ENCODE measurements at regions of chr16 and their contacts with region 1.

Region 1: GRCh38 chr16:2429034-2429770 is at the start of gene CCNF:
- DNase-seq: peak; percentile 87 to 98 (median 92)
- ATAC-seq: peak; percentile 99
- H3K4me3 ChIP-seq: peak within 1 kb of the TSS; percentile 83
- H3K4me3 Mint-ChIP-seq: peak within 1 kb of the TSS; percentile 81 to 97 (median 88)
- H3K27ac ChIP-seq: peak within 1 kb of the TSS; percentile 68
- H3K27ac Mint-ChIP-seq: peak within 1 kb of the TSS; percentile 11 to 88 (median 71)
- H3K4me1 ChIP-seq: peaks cover 5 to 10% of the 10 kb centered on the region in 2 donors
- H3K4me1 Mint-ChIP-seq: peaks cover 12 to 38% (median 19%) of the 10 kb centered on the region in 7 donors
- H3K27me3 ChIP-seq: no peaks in the 10 kb centered on the region
- H3K27me3 Mint-ChIP-seq: no peaks in the 10 kb centered on the region
- total RNA-seq, gene CCNF: 2.6 to 50.1 (median 3.4) TPM

Region 2: GRCh38 chr16:2205104-2205966 is 223.9 kb before region 1 on chr16 and contains the start of gene MLST8:
- CTCF ChIA-PET with region 1: no interaction called
- POLR2A ChIA-PET with region 1: interaction called, 4 read pairs
- intact Hi-C with region 1: loop called in 1 of 2 experiments (anchors 1 kb)
- DNase-seq: peak; percentile 88 to 100 (median 98)
- ATAC-seq: peak; percentile 97
- H3K4me3 ChIP-seq: peak within 1 kb of the TSS; percentile 93
- H3K4me3 Mint-ChIP-seq: peak within 1 kb of the TSS; percentile 80 to 95 (median 88)
- H3K27ac ChIP-seq: peak within 1 kb of the TSS; percentile 97
- H3K27ac Mint-ChIP-seq: peak within 1 kb of the TSS; percentile 70 to 91 (median 86)
- H3K4me1 ChIP-seq: peaks cover 11 to 13% of the 10 kb centered on the region in 2 donors
- H3K4me1 Mint-ChIP-seq: peaks cover 7 to 29% (median 21%) of the 10 kb centered on the region in 7 donors
- H3K27me3 ChIP-seq: no peaks in the 10 kb centered on the region
- H3K27me3 Mint-ChIP-seq: peaks cover 0 to 11% (median 0%) of the 10 kb centered on the region in 5 donors
- total RNA-seq, gene MLST8: 25.1 to 41.2 (median 35.5) TPM

Region 3: GRCh38 chr16:2340564-2341455 is 88.4 kb before region 1 on chr16 and contains the start of gene ABCA3:
- CTCF ChIA-PET with region 1: no interaction called
- POLR2A ChIA-PET with region 1: no interaction called
- intact Hi-C with region 1: loop called (anchors 1 to 2 kb)
- DNase-seq: peak; percentile 85 to 100 (median 93)
- ATAC-seq: peak; percentile 96
- H3K4me3 ChIP-seq: peak within 1 kb of the TSS; percentile 62
- H3K4me3 Mint-ChIP-seq: peak within 1 kb of the TSS; percentile 78 to 91 (median 86)
- H3K27ac ChIP-seq: peak within 1 kb of the TSS; percentile 15
- H3K27ac Mint-ChIP-seq: peak within 1 kb of the TSS in 7 of 9 donors; percentile 31 to 82 (median 64)
- H3K4me1 ChIP-seq: peaks cover 6 to 9% of the 10 kb centered on the region in 2 donors
- H3K4me1 Mint-ChIP-seq: peaks cover 9 to 19% (median 16%) of the 10 kb centered on the region in 7 donors
- H3K27me3 ChIP-seq: no peaks in the 10 kb centered on the region
- H3K27me3 Mint-ChIP-seq: peaks cover 0 to 40% (median 0%) of the 10 kb centered on the region in 5 donors
- total RNA-seq, gene ABCA3: 7.0 to 10.0 (median 8.1) TPM

Region 4: DNA sequence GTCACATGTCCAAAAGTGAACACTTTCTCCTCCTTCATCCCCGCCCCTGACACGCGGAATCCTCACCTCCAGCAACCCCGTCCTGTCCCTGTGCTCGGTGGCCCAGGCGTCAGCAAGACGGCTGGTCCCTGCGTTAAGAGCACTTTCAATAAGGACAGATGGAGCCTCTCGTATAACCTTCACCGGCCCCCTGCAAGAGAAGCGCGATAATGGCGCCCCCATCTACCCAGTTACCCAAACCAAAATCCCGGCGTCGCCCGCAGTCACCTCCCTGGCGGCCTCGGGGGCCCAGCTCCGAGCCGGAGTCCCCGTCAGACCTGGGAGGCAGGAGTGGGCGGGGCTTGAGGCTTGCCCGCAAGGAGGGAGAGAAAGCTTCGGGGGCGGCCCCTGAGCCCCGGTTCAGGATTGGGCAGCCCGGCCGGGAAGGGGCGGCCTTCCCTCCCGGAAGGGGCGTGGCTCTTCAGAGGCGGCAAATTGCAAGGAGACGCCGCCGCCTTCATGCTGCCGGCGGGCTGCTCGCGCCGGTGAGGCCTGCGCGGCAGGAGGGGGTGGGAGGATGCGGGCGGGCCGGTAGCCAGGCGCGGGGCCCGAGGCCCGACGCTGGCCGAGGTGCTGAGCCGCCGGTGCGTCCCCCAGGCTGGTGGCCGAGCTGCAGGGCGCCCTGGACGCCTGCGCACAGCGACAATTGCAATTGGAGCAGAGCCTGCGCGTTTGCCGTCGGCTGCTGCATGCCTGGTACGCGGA is 30.6 kb after region 1 on chr16 and contains the start of gene TEDC2:
- CTCF ChIA-PET with region 1: no interaction called
- POLR2A ChIA-PET with region 1: no interaction called
- intact Hi-C with region 1: loop called (anchors 1 kb)
- DNase-seq: peak; percentile 92 to 98 (median 94)
- ATAC-seq: peak; percentile 100
- H3K4me3 ChIP-seq: peak within 1 kb of the TSS; percentile 63
- H3K4me3 Mint-ChIP-seq: peak within 1 kb of the TSS; percentile 75 to 95 (median 88)
- H3K27ac ChIP-seq: peak within 1 kb of the TSS; percentile 57
- H3K27ac Mint-ChIP-seq: peak within 1 kb of the TSS in 7 of 9 donors; percentile 3 to 94 (median 69)
- H3K4me1 ChIP-seq: peaks cover 5 to 8% of the 10 kb centered on the region in 2 donors
- H3K4me1 Mint-ChIP-seq: peaks cover 4 to 14% (median 5%) of the 10 kb centered on the region in 7 donors
- H3K27me3 ChIP-seq: no peaks in the 10 kb centered on the region
- H3K27me3 Mint-ChIP-seq: no peaks in the 10 kb centered on the region
- total RNA-seq, gene TEDC2: 0.32 to 16.7 (median 0.71) TPM in 4 of 5 experiments, not detected in the other

Region 5: GRCh38 chr16:2486645-2487516 is 57.7 kb after region 1 on chr16:
- CTCF ChIA-PET with region 1: interaction called, 6 read pairs
- POLR2A ChIA-PET with region 1: interaction called, 3 read pairs
- intact Hi-C with region 1: loop called in 1 of 2 experiments (anchors 1 kb)
- DNase-seq: peak; percentile 54 to 86 (median 80)
- ATAC-seq: peak; percentile 96
- H3K4me3 ChIP-seq: no peak overlapping the region
- H3K4me3 Mint-ChIP-seq: peak overlapping the region; percentile 39 to 76 (median 56)
- H3K27ac ChIP-seq: peak overlapping the region; percentile 24
- H3K27ac Mint-ChIP-seq: peak overlapping the region; percentile 25 to 94 (median 75)
- H3K4me1 ChIP-seq: peaks cover 10 to 15% of the 10 kb centered on the region in 2 donors
- H3K4me1 Mint-ChIP-seq: peaks cover 11 to 23% (median 13%) of the 10 kb centered on the region in 7 donors
- H3K27me3 ChIP-seq: no peaks in the 10 kb centered on the region
- H3K27me3 Mint-ChIP-seq: no peaks in the 10 kb centered on the region

Region 6: DNA sequence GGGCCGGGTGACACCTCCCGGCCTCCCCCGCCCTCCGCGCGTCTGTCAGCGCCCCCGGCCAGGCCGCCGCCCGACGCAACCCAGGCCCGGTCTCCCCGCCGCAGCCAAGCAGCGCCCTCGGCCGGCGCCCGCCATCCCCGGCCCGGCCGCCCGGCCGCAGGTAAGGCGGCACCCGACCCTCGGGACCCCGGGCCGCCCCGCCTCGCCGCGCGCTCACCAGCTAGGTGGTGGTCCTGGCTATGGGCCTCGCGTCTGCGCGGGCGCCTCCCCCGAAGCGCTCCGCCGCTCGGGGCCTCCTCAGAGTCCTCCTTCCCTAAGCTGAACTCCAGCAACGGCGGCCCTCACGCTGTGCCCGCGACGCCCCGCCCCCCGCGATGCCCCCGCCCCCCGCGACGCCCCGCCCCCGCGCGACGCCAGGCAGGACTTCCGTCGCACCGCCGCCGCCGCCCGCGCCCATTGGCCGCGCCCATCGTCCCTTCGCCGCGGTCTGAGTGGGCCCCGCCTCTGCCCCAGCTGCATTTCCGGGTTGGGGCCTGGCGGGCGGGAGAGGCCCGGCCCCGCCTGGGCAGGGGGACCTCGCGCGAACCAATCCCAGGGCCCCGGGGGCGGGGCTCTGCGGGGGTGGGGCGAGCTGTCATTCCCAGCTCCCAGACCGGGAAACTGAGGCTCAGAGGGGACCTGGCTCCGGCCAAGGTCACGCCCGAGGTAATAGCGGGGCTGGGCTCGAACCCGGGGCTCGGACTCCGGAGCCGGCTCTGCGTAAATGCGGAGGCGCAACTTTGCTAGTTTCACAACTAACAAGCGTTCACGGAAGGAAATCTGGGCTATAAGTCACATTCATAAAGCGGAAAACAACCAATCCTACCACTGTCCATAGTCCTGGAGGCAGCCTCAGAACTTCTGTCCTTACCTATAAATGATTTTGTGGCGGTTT is 244.1 kb after region 1 on chr16:
- CTCF ChIA-PET with region 1: no interaction called
- POLR2A ChIA-PET with region 1: no interaction called
- intact Hi-C with region 1: loop called in 1 of 2 experiments (anchors 5 kb)
- DNase-seq: peak; percentile 89 to 97 (median 96)
- ATAC-seq: peak; percentile 97
- H3K4me3 ChIP-seq: peak overlapping the region; percentile 75
- H3K4me3 Mint-ChIP-seq: peak overlapping the region; percentile 68 to 90 (median 86)
- H3K27ac ChIP-seq: peak overlapping the region; percentile 75
- H3K27ac Mint-ChIP-seq: peak overlapping the region in 8 of 9 donors; percentile 68 to 89 (median 82)
- H3K4me1 ChIP-seq: peaks cover 8 to 9% of the 10 kb centered on the region in 2 donors
- H3K4me1 Mint-ChIP-seq: peaks cover 12 to 45% (median 34%) of the 10 kb centered on the region in 7 donors
- H3K27me3 ChIP-seq: no peaks in the 10 kb centered on the region
- H3K27me3 Mint-ChIP-seq: no peaks in the 10 kb centered on the region